Right cardiac atrium (tissue), 5 donors: ENCODE measurements at regions of chr1 and their contacts with region 1.

Region 1: DNA sequence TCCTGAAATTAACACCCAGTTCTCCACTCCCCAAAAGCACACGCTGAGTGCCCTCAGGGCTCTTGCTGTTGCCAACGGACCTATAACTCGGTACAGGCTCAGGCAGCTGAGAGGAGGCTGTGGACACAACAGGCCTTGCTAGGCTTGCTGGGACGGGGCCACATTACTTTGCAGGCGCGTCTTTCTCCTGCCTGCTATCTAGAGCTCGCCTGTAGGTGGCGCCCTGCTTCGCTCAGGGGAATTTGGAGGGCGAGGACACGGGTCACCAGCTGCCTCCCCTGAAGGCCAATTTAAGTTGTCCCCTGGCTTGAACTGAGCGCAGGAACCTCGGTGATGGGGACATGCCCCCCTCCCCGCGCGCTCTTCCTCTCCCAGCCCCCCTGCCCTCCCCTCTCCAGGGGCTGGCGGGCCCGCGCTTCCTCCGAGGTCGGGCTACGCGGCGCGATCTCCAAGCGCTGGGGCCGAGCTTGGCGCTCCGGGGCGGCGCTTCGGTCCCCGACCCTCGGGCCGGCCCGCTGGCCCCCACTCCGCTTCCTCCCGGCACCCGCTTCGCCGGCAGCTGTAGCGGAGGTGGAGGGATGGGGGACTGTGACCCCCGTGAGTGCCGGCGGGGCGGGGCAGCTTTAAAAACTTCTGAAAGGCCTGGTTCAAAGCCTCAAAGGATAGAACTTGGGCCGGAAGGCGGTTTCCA is 32.4 kb upstream of the NFIA start:
- DNase-seq: peak; percentile 93 to 97 (median 97)
- ATAC-seq: peak; percentile 86 to 87
- H3K4me3 ChIP-seq: peak overlapping the region; percentile 94
- H3K27ac ChIP-seq: peak overlapping the region; percentile 85
- H3K4me1 ChIP-seq: peaks cover 6% of the 10 kb centered on the region
- H3K27me3 ChIP-seq: no peaks in the 10 kb centered on the region

Region 2: DNA sequence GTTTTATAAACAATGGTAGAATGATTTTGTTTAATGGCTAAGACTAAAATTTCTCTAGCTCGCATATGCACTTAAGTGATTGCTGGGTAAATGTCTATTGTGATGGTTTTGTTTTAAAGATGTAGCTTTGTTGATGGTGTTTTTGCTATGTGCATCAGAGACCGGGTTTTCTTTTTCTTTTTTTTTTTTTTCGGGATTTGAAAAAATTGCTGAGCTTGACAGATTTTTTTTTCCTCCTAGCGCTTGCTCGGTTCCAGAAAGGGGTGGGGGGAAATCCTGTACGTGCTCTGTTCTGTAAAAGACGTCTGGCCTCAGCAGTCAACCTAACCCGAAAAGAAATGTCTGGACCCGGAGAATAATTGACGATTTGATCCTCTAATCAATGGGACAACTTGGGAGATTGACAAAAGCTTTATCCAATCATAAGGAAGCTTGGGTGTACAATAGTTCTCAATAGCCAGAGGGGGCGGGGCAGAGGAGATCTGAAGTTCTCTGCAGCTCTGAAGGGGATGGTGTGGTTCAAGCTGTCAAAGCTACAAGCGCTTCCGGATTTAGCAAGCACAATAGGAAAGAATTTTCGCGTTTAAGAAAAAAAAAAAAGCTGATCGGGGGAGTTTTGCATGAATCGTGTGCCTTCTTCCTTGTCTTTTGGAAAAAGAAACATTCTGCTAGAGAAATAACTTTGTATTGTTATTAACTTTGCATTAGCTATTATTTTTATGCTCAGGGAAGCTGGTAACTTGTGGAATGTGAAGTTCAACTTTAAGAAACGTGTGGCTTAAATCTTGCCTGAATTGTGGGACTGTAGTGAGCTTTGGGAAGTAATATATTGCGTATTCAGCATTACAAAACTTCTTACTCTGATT is 27.9 kb after region 1 on chr1:
- intact Hi-C with region 1: loop called in 1 of 4 experiments (anchors 2 kb)
- DNase-seq: peak; percentile 93 to 97 (median 94)
- ATAC-seq: peak; percentile 85 to 89
- H3K4me3 ChIP-seq: peak overlapping the region; percentile 91
- H3K27ac ChIP-seq: peak overlapping the region; percentile 62
- H3K4me1 ChIP-seq: peaks cover 8% of the 10 kb centered on the region
- H3K27me3 ChIP-seq: no peaks in the 10 kb centered on the region

Region 3: GRCh38 chr1:61202854-61203598 is 153.0 kb after region 1 on chr1:
- intact Hi-C with region 1: no loop called
- DNase-seq: no peak
- ATAC-seq: peak in 1 of 2 donors; percentile 17
- H3K4me3 ChIP-seq: no peak overlapping the region
- H3K27ac ChIP-seq: no peak overlapping the region
- H3K4me1 ChIP-seq: peaks cover 2% of the 10 kb centered on the region
- H3K27me3 ChIP-seq: no peaks in the 10 kb centered on the region

Region 4: DNA sequence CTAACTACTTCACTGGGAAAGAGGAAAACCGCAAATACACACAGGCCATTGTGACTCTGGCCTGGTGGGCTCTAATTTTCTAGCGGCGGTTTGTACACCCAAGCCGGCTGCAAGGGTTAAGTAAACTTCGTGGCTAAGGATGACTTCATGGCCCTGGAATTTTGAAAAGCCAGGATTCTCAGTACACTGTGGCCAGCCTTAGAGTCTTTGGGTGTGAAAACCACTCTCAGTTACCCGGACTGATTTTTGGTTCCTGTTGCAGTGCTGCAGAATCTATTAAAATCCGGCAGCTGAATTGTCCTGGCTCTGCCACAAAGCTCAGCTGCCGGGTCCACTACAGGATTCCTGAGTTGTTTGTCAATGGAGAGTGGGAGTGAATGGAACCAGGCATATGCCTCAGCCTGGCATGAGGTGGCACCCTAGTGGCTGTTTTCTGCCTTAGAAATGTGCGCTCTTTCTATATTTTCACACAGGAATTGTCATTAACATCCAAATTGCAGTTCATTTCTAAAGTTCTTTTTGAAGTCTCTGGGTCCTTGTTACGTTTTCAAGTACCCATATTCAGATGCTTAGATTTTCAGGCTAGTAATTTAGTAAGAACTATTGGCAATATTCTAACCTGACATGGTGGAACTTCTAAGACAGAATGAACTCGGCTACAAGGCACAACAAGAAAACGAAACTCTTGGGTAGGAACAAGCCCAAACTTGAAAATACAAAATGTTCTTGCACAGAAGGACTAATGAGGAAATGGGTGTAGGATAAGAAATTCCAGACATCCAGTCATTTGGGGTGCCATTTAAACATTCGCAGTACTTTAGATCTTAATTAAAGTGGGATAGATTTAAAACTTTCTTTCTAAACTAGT is 288.2 kb after region 1 on chr1:
- intact Hi-C with region 1: loop called in 3 of 4 experiments (anchors 5 to 10 kb)
- DNase-seq: peak; percentile 69 to 87 (median 78)
- ATAC-seq: peak; percentile 90 to 91
- H3K4me3 ChIP-seq: peak overlapping the region; percentile 20
- H3K27ac ChIP-seq: peak overlapping the region; percentile 99
- H3K4me1 ChIP-seq: peaks cover 22% of the 10 kb centered on the region
- H3K27me3 ChIP-seq: no peaks in the 10 kb centered on the region

Region 5: DNA sequence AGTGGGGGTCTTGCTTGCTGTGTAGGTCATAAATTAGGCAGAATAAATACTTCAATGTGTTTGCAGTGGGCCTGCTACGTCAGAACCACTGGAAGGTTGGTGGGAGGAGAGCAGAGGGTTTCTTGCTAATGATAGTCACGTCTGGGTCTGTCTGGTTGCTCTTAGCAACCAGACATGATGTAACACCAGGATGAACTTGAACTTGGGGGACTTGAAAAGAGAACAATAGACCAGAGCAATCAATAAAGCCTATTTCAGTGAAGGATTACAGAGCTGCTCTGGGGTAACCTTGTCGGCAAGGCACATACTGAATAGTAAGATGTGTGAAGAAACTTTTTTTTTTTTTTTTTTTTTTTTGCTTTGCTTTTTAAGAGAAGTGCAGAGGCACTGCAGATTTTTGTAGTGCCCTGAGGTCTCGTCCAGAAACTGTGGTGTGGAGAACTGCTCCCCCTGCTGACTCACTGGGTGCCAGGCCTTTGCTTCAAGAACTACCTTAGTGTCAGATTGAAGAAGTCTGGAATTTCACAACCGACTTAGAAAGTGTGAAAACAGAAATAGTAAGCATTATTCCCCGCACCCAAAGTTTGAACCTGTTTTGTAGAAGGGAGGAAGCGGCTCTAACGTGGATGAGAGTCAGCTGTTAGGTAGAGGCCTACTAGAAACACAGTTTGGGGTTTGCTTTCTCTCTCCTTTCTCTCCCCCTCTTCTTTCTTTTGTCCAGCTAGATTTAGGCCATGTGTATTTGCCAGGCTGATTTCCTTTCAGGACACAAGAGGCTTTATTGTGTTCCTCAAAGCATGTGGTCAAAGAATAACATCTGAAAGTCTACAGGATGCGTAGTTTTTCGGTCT is 403.3 kb after region 1 on chr1:
- intact Hi-C with region 1: loop called (anchors 5 to 10 kb)
- DNase-seq: peak; percentile 89 to 96 (median 93)
- ATAC-seq: peak; percentile 75 to 87
- H3K4me3 ChIP-seq: no peak overlapping the region
- H3K27ac ChIP-seq: peak overlapping the region; percentile 88
- H3K4me1 ChIP-seq: peaks cover 27% of the 10 kb centered on the region
- H3K27me3 ChIP-seq: no peaks in the 10 kb centered on the region

Region 6: GRCh38 chr1:61851849-61852669 is 802.1 kb after region 1 on chr1:
- intact Hi-C with region 1: loop called in 2 of 4 experiments (anchors 10 kb)
- DNase-seq: no peak
- ATAC-seq: peak; percentile 70 to 76
- H3K4me3 ChIP-seq: no peak overlapping the region
- H3K27ac ChIP-seq: no peak overlapping the region
- H3K4me1 ChIP-seq: no peaks in the 10 kb centered on the region
- H3K27me3 ChIP-seq: no peaks in the 10 kb centered on the region